ENCODE measurements at regions of chr2 and their contacts with region 1.

Region 1: DNA sequence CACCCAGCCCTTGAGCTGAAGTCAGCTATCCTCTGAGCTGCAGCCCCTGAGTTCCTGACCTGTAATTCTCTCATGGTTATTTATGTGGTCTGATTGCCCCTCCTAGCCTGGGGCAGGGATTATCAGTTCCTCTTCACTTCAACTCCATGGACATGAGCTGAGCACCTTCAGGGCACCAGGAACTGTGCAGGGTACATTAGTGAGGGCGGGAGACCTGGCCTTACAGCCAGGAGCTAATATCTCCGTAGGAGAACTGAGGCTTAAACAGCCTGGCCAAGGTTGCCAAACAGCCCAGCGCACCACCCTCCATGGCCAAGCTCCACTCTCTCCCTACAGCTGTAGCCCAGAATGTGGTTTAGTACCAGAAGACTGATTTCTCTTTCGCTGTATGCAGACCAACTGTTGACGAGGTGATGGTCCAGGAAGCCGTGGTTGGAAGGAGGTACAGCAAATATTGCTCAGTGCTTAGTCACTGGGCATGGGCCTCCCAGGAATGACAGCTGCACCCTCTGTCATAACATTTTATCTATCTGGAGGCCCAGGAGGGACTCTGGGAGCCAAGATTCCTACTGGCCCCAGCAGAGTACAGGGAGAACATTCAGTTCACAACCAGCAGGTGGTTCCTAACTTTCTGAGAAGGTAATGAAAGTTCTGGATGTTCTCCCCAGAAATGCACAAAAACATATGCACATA is 228.7 kb upstream of the SIX2 start:
- DNase-seq: peak; percentile 95
- H3K4me3 ChIP-seq: no peak overlapping the region
- H3K27ac ChIP-seq: peak overlapping the region; percentile 15
- H3K4me1 ChIP-seq: peaks cover 28% of the 10 kb centered on the region
- H3K27me3 ChIP-seq: no peaks in the 10 kb centered on the region
- CTCF ChIP-seq: peak; percentile 21 to 30

Region 2: DNA sequence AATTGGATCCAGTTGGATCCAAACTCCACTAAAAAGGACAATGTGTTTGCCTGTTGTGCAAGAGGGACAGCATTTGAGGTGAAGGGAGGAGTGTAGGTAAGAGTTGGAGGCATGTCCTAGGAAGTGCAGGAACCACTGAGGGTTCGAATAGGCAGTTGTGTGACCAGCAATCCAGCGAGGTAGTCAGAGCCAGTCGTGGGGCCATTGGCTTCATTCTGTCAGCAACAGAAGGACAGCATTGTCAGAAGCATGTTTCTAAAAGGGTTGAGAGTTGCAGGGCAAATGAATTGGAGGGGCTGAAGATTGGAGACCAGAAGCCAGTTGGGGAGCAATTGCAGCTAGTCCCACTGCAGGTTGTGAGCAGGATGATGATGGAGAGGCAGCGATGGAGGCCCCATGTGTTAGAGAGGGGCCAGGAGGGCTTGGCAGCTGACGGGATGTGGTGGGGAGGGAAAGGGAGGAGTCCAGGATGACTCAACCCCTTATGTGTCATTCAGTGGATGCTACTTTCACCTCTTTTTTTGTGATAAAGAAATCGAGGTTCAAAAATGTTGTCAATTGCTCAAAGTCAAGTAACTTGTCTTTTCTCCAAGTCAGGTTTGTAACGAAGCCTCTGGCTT is 393.2 kb before region 1 on chr2:
- CTCF ChIA-PET with region 1: no interaction called
- dilution Hi-C with region 1: no loop called
- in situ Hi-C with region 1: no loop called
- intact Hi-C with region 1: no loop called
- DNase-seq: peak; percentile 17
- H3K4me3 ChIP-seq: no peak overlapping the region
- H3K27ac ChIP-seq: no peak overlapping the region
- H3K4me1 ChIP-seq: no peaks in the 10 kb centered on the region
- H3K27me3 ChIP-seq: peaks cover 4% of the 10 kb centered on the region
- CTCF ChIP-seq: no peak

Region 3: DNA sequence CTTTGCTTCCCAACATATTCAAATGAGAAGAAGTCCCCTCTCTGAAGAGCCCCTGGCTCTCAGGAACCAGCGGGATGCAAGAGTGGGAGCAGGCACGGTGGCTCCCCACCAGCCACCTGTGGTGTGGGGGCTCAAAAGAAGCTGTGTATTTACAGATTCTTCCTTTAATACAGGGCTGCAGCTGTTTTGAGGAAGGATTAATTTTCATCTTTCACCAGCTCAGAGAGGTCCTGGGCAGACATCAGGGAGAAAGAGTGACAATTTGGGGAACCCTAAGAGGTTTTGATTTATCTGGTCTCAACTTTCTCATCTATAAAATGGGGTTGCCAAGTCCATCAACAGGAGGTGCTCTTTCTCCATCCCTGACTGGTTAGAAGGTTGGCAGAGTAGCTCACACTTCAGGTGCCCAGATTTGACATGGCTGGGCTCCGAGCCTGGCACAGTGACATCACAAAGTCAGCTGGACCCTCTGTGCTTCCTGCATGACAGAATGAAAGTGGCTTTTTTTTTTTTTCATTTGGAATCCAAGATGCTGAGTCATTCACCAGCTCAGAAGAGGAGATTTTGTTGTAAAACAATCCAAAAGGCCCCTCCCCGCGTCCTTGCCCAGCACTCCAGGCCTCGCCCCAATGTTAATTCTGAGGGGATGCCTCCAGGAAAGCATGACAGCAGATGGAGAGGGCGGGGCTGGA is 213.2 kb before region 1 on chr2:
- CTCF ChIA-PET with region 1: no interaction called
- dilution Hi-C with region 1: no loop called
- in situ Hi-C with region 1: no loop called
- intact Hi-C with region 1: loop called (anchors 10 kb)
- DNase-seq: peak; percentile 87
- H3K4me3 ChIP-seq: no peak overlapping the region
- H3K27ac ChIP-seq: no peak overlapping the region
- H3K4me1 ChIP-seq: peaks cover 2% of the 10 kb centered on the region
- H3K27me3 ChIP-seq: no peaks in the 10 kb centered on the region
- CTCF ChIP-seq: peak; percentile 13 to 35

Region 4: GRCh38 chr2:45169339-45170190 is 68.4 kb before region 1 on chr2:
- CTCF ChIA-PET with region 1: no interaction called
- dilution Hi-C with region 1: no loop called
- in situ Hi-C with region 1: no loop called
- intact Hi-C with region 1: loop called (anchors 5 kb)
- DNase-seq: no peak
- H3K4me3 ChIP-seq: peak overlapping the region; percentile 44 to 52 (median 45)
- H3K27ac ChIP-seq: no peak overlapping the region
- H3K4me1 ChIP-seq: peaks cover 34% of the 10 kb centered on the region
- H3K27me3 ChIP-seq: peaks cover 7% of the 10 kb centered on the region
- CTCF ChIP-seq: no peak

Region 5: DNA sequence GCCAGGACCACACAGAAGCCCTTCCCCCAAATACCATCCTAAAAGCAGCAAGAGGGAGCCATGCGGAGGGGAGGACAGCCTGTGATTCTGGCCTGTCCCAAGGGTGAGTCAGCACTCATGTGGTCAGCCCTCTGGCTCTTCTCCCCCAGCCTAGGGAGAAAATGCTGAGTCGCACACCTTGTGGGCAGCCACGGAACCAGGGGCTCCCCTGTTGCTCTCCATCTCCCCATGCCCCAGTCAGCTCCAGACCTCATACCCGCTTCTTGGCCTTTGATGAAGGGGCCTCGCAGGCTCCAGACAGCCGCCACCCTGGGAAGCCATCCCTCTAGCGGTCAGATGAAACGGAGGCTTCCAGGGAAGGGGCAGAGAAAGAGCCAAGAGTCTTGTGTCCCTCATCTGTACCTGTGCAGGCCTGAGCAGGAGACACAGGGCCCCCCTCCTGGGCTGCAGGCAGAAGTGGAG is 47.5 kb before region 1 on chr2:
- CTCF ChIA-PET with region 1: no interaction called
- dilution Hi-C with region 1: no loop called
- in situ Hi-C with region 1: no loop called
- intact Hi-C with region 1: no loop called
- DNase-seq: peak; percentile 62
- H3K4me3 ChIP-seq: no peak overlapping the region
- H3K27ac ChIP-seq: no peak overlapping the region
- H3K4me1 ChIP-seq: peaks cover 4% of the 10 kb centered on the region
- H3K27me3 ChIP-seq: no peaks in the 10 kb centered on the region
- CTCF ChIP-seq: no peak

Region 6: GRCh38 chr2:45353879-45354278 is 115.9 kb after region 1 on chr2:
- CTCF ChIA-PET with region 1: no interaction called
- dilution Hi-C with region 1: no loop called
- in situ Hi-C with region 1: no loop called
- intact Hi-C with region 1: no loop called
- DNase-seq: peak; percentile 69
- H3K4me3 ChIP-seq: no peak overlapping the region
- H3K27ac ChIP-seq: no peak overlapping the region
- H3K4me1 ChIP-seq: peaks cover 5% of the 10 kb centered on the region
- H3K27me3 ChIP-seq: no peaks in the 10 kb centered on the region
- CTCF ChIP-seq: no peak

Region 7: DNA sequence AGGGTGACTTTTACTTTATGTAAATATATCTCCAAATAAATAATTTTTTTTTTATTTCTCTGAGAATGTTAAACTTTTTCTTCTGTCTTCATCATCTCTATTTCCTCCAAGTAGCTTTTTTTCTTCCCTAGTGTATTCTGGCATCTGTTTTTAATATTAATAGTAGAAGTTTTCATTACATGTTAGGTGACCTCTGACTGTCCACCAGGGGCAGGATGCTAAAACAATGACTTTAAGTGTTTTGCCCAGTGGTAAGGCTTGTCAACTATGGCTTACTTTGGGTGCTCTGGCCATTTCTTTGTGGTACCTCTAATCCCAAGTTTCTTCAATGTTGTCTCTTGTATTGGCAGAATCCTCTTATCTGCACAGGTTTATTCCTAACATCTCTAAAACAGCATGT is 246.0 kb after region 1 on chr2:
- CTCF ChIA-PET with region 1: no interaction called
- dilution Hi-C with region 1: no loop called
- in situ Hi-C with region 1: no loop called
- intact Hi-C with region 1: loop called (anchors 10 kb)
- DNase-seq: no peak
- H3K4me3 ChIP-seq: no peak overlapping the region
- H3K27ac ChIP-seq: no peak overlapping the region
- H3K4me1 ChIP-seq: no peaks in the 10 kb centered on the region
- H3K27me3 ChIP-seq: no peaks in the 10 kb centered on the region
- CTCF ChIP-seq: peak; percentile 23 to 26

Measured in mammary epithelial cell (primary cell).